MCF 10A (cell line): ENCODE measurements at regions of chr16 and their contacts with region 1.

Region 1: DNA sequence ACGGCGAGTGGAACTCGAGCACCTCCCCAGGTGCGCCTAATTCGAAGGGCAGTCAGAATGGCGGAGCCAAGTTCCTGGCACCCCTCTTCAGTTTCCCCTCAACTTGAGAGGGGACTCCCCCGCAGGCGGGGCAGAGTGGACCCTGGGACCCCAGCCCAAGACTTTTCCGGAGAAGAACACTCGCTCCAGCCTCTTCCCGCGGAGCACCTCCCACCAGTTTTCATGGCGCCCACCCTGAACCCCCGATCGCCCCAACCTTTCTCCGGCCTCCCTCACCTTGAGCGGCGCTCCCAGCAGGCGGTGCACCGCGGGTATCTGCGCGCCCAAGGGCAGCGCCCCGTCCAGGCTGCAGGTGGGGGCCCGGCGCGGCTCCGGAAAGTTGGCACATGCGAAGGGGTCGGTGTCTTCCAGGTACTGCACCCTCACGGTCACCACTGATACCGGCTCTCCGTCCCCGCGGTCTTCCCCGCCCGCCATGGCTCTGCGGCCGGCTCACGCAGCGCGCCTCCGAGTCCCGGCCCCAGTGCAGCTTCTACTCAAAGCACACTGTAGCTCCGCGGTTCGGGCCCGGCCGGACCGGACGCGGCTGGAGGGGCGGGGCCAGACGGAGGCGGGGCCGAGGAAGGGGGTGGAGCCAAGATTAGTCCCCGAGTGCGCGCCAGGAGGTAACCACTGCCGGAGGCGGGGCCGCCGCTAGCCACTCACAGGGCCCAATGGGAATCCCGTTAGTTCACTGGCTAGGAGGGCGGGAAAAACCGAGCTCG is at the start of gene FHOD1:
- DNase-seq: peak; percentile 97
- H3K4me3 Mint-ChIP-seq: peak within 1 kb of the TSS; percentile 81
- H3K27ac Mint-ChIP-seq: peak within 1 kb of the TSS; percentile 78
- H3K4me1 Mint-ChIP-seq: peaks cover 41% of the 10 kb centered on the region
- H3K27me3 Mint-ChIP-seq: peaks cover 18% of the 10 kb centered on the region
- CTCF ChIP-seq: no peak
- total RNA-seq, gene FHOD1: 12.1 and 14.7 TPM in 2 replicates

Region 2: DNA sequence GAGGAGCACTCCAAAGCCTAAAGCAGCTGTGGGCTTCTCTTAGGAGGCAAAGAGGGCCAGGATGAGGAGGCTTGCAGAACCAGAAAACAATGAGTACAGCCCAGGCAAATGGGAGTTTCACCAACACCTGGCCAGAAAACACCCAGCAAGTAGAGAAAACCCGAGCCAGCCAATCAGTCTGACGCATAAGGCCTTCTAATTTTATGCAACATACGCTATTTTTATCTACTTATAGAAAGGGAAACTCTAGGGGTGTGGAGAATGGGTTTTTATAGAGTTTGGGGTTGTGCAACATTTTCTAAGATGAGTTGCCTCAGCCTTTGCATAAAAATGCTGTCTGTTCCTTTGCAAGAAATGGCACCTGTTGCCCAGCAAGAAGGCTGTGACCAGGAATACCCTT is 1409.7 kb before region 1 on chr16:
- CTCF ChIA-PET with region 1: no interaction called
- POLR2A ChIA-PET with region 1: no interaction called
- intact Hi-C with region 1: no loop called
- DNase-seq: peak; percentile 49
- H3K4me3 Mint-ChIP-seq: no peak overlapping the region
- H3K27ac Mint-ChIP-seq: no peak overlapping the region
- H3K4me1 Mint-ChIP-seq: no peaks in the 10 kb centered on the region
- H3K27me3 Mint-ChIP-seq: no peaks in the 10 kb centered on the region
- CTCF ChIP-seq: no peak

Region 3: GRCh38 chr16:67183627-67184328 is 63.3 kb before region 1 on chr16 and contains the start of gene MATCAP1:
- CTCF ChIA-PET with region 1: interaction called, 5 read pairs
- POLR2A ChIA-PET with region 1: interaction called, 13 read pairs
- intact Hi-C with region 1: no loop called
- DNase-seq: peak; percentile 98
- H3K4me3 Mint-ChIP-seq: no peak within 1 kb of the TSS
- H3K27ac Mint-ChIP-seq: no peak within 1 kb of the TSS
- H3K4me1 Mint-ChIP-seq: peaks cover 10% of the 10 kb centered on the region
- H3K27me3 Mint-ChIP-seq: no peaks in the 10 kb centered on the region
- CTCF ChIP-seq: no peak
- total RNA-seq, gene MATCAP1: 18.1 and 18.7 TPM in 2 replicates

Region 4: DNA sequence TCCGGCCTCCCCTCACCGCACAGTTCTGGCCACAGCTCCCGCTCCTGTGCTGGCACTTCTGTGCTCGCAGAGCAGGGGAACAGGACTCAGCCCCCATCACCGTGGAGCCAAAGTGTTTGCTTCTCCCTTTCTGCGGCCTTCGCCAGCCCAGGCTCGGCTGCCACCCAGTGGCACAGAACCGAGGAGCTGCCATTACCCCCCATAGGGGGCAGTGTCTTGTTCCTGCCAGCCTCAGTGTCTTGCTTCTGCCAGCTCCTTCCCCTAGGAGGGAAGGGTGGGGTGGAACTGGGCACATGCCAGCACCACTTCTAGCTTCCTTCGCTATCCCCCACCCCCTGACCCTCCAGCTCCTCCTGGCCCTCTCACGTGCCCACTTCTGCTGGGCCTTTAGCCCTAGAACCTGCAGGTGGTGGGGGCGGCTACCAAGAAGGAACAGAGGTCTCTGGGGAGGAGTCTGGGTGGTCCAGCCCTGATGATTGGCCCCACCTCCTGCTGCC is 48.8 kb before region 1 on chr16:
- CTCF ChIA-PET with region 1: interaction called, 4 read pairs
- POLR2A ChIA-PET with region 1: interaction called, 28 read pairs
- intact Hi-C with region 1: loop called (anchors 2 kb)
- DNase-seq: peak; percentile 84
- H3K4me3 Mint-ChIP-seq: peak overlapping the region; percentile 89
- H3K27ac Mint-ChIP-seq: peak overlapping the region; percentile 55
- H3K4me1 Mint-ChIP-seq: peaks cover 34% of the 10 kb centered on the region
- H3K27me3 Mint-ChIP-seq: no peaks in the 10 kb centered on the region
- CTCF ChIP-seq: peak; percentile 74

Region 5: DNA sequence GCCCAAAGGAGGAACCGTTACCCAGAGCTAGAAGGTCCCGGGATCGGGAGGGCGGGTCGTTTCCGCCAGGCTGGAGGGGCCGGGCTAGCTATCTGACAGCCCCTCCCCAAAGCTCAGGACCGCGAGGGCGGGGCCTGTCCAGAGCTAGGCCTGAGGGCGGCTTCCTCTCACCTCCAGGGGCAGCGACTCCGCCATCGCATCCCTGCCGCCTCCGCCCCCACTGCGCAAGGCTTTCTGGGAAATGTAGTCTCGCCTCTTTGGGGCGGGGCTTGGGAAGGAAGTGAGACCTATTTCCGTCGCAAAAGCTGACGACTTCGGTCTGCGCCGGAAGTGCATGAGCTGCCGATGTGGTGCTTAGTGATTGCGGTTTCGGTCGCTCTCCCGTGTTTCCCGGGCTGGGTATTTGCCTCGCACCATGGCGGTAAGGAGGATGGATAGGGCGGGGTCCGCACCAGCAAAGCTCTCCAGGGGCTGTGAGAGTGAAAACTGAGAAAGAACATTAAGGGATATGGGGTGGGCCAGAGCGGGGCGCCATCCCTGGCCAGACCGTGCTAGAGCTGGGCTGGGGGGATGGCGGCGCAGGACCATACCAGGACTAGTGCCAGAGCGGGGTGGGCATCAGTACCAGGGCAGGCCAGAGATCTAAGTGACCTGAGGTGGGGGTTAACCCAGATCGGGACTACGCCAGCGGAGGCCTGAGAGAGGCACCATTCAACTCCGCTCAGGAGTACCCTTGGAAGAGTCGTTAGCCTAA is 20.1 kb before region 1 on chr16 and contains the start of gene TMEM208:
- CTCF ChIA-PET with region 1: interaction called, 16 read pairs
- POLR2A ChIA-PET with region 1: interaction called, 45 read pairs
- intact Hi-C with region 1: loop called (anchors 2 kb)
- DNase-seq: peak; percentile 99
- H3K4me3 Mint-ChIP-seq: peak within 1 kb of the TSS; percentile 99
- H3K27ac Mint-ChIP-seq: peak within 1 kb of the TSS; percentile 99
- H3K4me1 Mint-ChIP-seq: peaks cover 21% of the 10 kb centered on the region
- H3K27me3 Mint-ChIP-seq: no peaks in the 10 kb centered on the region
- CTCF ChIP-seq: no peak
- total RNA-seq, gene TMEM208: 44.4 and 55.5 TPM in 2 replicates